BJ (cell line): ENCODE measurements at regions of chr12 and their contacts with region 1.

Region 1: GRCh38 chr12:57261428-57261865 is 10.5 kb upstream of the STAC3 start:
- DNase-seq: no peak
- H3K4me3 ChIP-seq: no peak overlapping the region
- H3K27me3 ChIP-seq: no peaks in the 10 kb centered on the region
- CTCF ChIP-seq: no peak

Region 2: GRCh38 chr12:57276935-57277563 is 15.6 kb after region 1 on chr12:
- CTCF ChIA-PET with region 1: interaction called, 14 read pairs
- POLR2A ChIA-PET with region 1: interaction called, 3 read pairs
- DNase-seq: no peak
- H3K4me3 ChIP-seq: no peak overlapping the region
- H3K27me3 ChIP-seq: no peaks in the 10 kb centered on the region
- CTCF ChIP-seq: peak; percentile 61